ENCODE measurements at regions of chr20 and their contacts with region 1.

Region 1: DNA sequence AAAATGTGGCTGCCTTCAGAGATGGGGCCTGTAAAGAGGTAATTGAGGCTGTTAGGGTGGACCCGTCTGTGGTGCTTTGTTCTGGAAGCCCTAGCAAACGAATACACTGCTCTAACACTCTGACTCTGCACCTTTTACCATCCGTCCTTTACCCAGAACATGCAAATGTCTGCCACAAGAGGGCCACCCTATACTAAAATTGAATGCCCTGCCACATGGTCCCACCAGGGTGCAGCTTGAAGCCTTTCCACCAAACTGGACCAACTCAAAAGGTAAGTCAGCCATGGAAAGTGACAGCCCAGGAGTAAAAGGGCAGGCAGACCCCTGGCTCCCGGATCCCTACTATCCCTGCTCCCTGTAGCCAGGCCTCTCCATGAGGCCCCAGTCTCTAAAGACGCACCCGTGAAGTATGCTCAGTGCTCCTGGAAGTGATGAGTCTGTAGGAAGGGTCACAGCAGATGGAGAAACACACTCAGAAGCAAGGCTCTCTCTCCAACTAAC is 5.8 kb upstream of the BFSP1 start:
- DNase-seq: peak; percentile 90 to 97
- ATAC-seq: peak; percentile 98
- H3K4me3 ChIP-seq: no peak overlapping the region
- H3K27ac ChIP-seq: peak overlapping the region; percentile 60 to 80
- H3K4me1 ChIP-seq: peaks cover 41% of the 10 kb centered on the region
- CTCF ChIP-seq: peak; percentile 99
- EP300 ChIP-seq: no peak
- POLR2A ChIP-seq: no peak
- RAD21 ChIP-seq: peak; percentile 100

Region 2: GRCh38 chr20:17558154-17558940 is 21.4 kb after region 1 on chr20:
- CTCF ChIA-PET with region 1: interaction called, 30 read pairs
- POLR2A ChIA-PET with region 1: interaction called, 20 read pairs
- DNase-seq: peak; percentile 92 to 93
- ATAC-seq: peak; percentile 92 to 94
- H3K4me3 ChIP-seq: peak overlapping the region; percentile 26
- H3K27ac ChIP-seq: peak overlapping the region; percentile 89 to 96
- H3K4me1 ChIP-seq: peaks cover 62% of the 10 kb centered on the region
- CTCF ChIP-seq: no peak
- EP300 ChIP-seq: peak in 1 of 2 experiments; percentile 65; a peak in 2 of 5 replicates
- POLR2A ChIP-seq: peak; percentile 53
- RAD21 ChIP-seq: no peak; a peak in 4 of 5 replicates

Region 3: DNA sequence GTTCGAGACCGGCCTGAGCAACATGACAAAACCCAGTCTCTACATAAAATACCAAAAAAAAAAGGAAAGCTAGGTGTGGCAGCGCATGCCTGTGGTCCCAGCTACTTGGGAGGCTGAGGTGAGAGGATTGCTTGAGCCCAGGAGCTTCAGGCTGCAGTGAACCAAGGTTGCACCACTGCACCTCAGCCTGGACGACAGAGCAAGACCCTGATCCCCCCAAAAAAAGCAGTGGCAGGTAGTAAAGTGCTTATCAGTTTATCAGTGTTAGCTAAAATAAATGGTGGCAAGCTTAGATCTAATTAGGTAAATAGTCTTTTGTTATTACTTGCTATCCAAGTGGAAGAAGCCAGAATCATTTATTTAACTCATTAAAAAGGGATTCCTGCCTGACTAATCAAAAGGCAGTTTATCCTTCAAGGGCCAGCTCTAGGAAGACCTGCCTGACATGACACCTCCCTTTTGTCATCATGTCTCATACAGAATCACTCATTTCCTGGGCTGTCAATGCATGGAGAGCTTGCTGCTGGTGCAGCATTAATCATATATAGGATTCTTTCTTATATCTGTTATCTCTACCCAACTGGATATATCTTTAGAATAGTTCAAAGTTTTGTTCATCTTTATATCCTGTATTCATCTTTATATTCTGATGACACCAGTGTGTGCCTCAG is 42.5 kb after region 1 on chr20:
- CTCF ChIA-PET with region 1: interaction called, 94 read pairs
- POLR2A ChIA-PET with region 1: interaction called, 5 read pairs
- DNase-seq: no peak
- ATAC-seq: peak in 1 of 2 experiments; percentile 22; a peak in 3 of 6 replicates
- H3K4me3 ChIP-seq: no peak overlapping the region
- H3K27ac ChIP-seq: 0 out of 6 replicates have a peak overlapping the region, but pooled peaks of 1 of the 2 experiments have one; percentile 3
- H3K4me1 ChIP-seq: peaks cover 75% of the 10 kb centered on the region
- CTCF ChIP-seq: no peak
- EP300 ChIP-seq: no peak
- POLR2A ChIP-seq: no peak
- RAD21 ChIP-seq: no peak

Region 4: GRCh38 chr20:17594443-17594842 is 57.4 kb after region 1 on chr20:
- CTCF ChIA-PET with region 1: interaction called, 22 read pairs
- POLR2A ChIA-PET with region 1: interaction called, 3 read pairs
- DNase-seq: no peak
- ATAC-seq: no peak; a peak in 1 of 6 replicates
- H3K4me3 ChIP-seq: no peak overlapping the region
- H3K27ac ChIP-seq: no peak overlapping the region
- H3K4me1 ChIP-seq: peaks cover 32% of the 10 kb centered on the region
- CTCF ChIP-seq: no peak
- EP300 ChIP-seq: no peak
- POLR2A ChIP-seq: no peak
- RAD21 ChIP-seq: no peak

Region 5: DNA sequence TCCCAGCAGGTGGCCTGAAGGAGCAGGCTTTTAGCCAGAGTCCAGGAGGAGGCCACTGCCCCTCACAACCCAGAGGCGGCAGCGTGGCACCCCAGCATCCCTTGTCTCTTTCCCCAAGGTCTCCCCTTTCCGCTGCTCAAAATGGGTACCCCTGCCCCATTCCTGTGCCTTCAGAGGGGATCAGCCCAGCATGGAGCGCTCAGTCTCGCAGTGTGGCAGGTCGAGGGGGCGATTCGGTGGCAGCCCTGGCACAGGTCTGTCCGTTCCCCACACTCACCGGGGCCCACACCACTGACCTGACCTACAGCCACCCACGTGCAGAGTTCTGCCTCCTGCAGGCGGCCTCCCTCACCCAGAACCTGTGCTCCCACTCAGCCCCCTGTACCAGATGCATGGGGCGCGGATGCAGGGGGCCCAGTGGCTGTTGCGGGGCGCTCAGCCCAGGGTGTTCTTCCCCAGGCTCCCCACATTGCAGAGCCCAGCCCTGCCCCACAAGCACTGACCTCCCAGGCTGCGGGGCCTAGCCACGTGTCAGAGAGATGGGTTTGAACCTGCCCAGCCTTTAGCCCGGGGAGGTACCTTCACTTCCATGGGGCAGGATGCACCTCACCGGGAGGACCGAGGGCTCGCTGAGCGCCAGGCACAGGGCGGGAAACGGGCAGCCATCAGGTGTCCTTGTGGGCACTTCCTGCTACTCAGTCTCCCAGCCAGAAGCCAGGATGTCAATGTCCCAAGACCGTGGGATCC is 74.7 kb after region 1 on chr20:
- CTCF ChIA-PET with region 1: interaction called, 501 read pairs
- POLR2A ChIA-PET with region 1: no interaction called
- DNase-seq: peak in 1 of 2 experiments; percentile 31
- ATAC-seq: peak; percentile 20 to 25
- H3K4me3 ChIP-seq: no peak overlapping the region
- H3K27ac ChIP-seq: peak overlapping the region in 1 of 2 experiments; percentile 66; a peak in 3 of 6 replicates
- H3K4me1 ChIP-seq: peaks cover 14% of the 10 kb centered on the region; the same call in 2 of the 3 replicates
- CTCF ChIP-seq: peak; percentile 36
- EP300 ChIP-seq: no peak
- POLR2A ChIP-seq: no peak
- RAD21 ChIP-seq: peak; percentile 36 to 44; a peak in 3 of 5 replicates

Measured in A549 (cell line).